ENCODE measurements at regions of chr1 and their contacts with region 1.

Region 1: GRCh38 chr1:64898107-64898845 is 68.1 kb downstream of the JAK1 start:
- DNase-seq: peak; percentile 61
- H3K4me3 Mint-ChIP-seq: no peak overlapping the region
- H3K27ac Mint-ChIP-seq: peak overlapping the region; percentile 11
- H3K4me1 Mint-ChIP-seq: peaks cover 92% of the 10 kb centered on the region
- H3K27me3 Mint-ChIP-seq: no peaks in the 10 kb centered on the region

Region 2: GRCh38 chr1:64881281-64881680 is 17.0 kb before region 1 on chr1:
- CTCF ChIA-PET with region 1: no interaction called
- POLR2A ChIA-PET with region 1: interaction called, 4 read pairs
- intact Hi-C with region 1: loop called (anchors 2 kb)
- DNase-seq: no peak
- H3K4me3 Mint-ChIP-seq: no peak overlapping the region
- H3K27ac Mint-ChIP-seq: no peak overlapping the region
- H3K4me1 Mint-ChIP-seq: peaks cover 68% of the 10 kb centered on the region
- H3K27me3 Mint-ChIP-seq: no peaks in the 10 kb centered on the region

Region 3: DNA sequence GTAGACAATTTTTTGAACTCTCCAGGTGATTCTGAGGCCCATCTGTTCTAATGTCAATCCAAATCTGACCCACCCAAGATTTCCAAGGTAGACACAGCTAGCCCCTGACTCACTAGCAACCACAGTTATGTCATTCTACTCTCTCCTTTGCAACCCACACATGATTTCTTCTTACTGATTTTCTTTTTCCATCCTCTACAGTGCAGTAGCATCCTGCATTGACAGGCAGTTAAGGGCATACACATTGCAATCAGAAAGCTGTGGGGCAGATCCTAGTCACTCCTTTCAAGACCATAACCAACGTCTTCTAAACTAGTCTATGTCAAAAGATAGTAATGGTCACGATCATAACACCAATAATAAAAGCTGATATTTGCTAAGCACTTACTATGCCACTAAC is 13.9 kb after region 1 on chr1:
- CTCF ChIA-PET with region 1: interaction called, 3 read pairs
- POLR2A ChIA-PET with region 1: interaction called, 8 read pairs
- intact Hi-C with region 1: loop called (anchors 2 kb)
- DNase-seq: peak; percentile 25
- H3K4me3 Mint-ChIP-seq: no peak overlapping the region
- H3K27ac Mint-ChIP-seq: no peak overlapping the region
- H3K4me1 Mint-ChIP-seq: peaks cover 84% of the 10 kb centered on the region
- H3K27me3 Mint-ChIP-seq: no peaks in the 10 kb centered on the region

Measured in activated CD4-positive, alpha-beta memory T cell treated with anti-CD3 and anti-CD28 coated beads for 36 hours (primary cell).